Right cardiac atrium (tissue), 5 donors: ENCODE measurements at regions of chr22 and their contacts with region 1.

Region 1: DNA sequence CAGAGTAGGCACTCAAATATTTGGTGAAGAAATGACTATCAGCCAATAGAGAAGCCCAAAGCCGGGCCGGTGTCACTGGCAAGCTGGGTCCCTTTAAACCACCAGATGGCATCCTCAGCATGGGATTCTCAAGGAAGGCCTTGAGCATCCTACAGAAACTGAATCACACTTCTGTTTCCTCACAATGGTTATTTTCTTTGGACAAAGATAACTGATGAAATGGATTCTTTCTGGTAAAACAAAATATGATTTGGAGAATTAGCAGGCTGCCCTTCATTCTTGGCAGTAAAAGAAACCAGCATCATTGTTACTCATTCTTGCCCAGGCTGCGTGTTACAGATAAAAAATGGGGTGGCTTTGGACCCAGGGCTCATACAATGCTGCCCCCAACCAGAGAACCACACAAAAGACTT is 30.3 kb upstream of the ASPHD2 start:
- DNase-seq: peak; percentile 42 to 63 (median 58)
- ATAC-seq: peak; percentile 67 to 88
- H3K4me3 ChIP-seq: no peak overlapping the region
- H3K27ac ChIP-seq: no peak overlapping the region
- H3K4me1 ChIP-seq: no peaks in the 10 kb centered on the region
- H3K27me3 ChIP-seq: no peaks in the 10 kb centered on the region

Region 2: GRCh38 chr22:26345496-26345895 is 53.3 kb before region 1 on chr22:
- intact Hi-C with region 1: no loop called
- DNase-seq: no peak
- ATAC-seq: no peak
- H3K4me3 ChIP-seq: no peak overlapping the region
- H3K27ac ChIP-seq: no peak overlapping the region
- H3K4me1 ChIP-seq: no peaks in the 10 kb centered on the region
- H3K27me3 ChIP-seq: no peaks in the 10 kb centered on the region

Region 3: DNA sequence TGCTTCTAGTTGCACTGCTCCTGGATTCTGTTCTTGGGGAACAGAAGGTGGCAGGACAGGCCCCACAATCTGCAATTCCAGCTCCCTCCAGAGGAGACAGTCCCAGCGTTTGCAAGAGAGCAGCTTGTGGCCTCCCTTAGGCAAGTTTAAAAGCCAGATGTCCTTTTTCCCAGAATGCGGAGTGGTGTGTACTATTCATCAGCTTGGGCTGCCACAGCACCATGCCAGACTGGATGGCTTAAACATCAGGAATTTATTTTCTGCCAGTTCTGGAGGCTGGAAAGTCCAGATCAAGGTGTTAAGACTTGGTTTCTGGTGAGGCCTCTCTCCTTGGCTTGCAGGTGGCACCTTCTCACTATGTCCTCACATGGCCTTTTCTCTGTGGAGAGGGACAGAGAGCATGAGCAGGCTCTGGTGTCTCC is 270.3 kb after region 1 on chr22:
- intact Hi-C with region 1: loop called in 1 of 4 experiments (anchors 10 kb)
- DNase-seq: peak in 1 of 3 donors; percentile 21
- ATAC-seq: no peak
- H3K4me3 ChIP-seq: no peak overlapping the region
- H3K27ac ChIP-seq: no peak overlapping the region
- H3K4me1 ChIP-seq: peaks cover 3% of the 10 kb centered on the region
- H3K27me3 ChIP-seq: no peaks in the 10 kb centered on the region